ENCODE measurements at regions of chr12 and their contacts with region 1.

Region 1: GRCh38 chr12:111529424-111530368 is 69.4 kb downstream of the ATXN2 start:
- DNase-seq: peak; percentile 6
- H3K4me3 ChIP-seq: no peak overlapping the region
- H3K27me3 ChIP-seq: no peaks in the 10 kb centered on the region
- CTCF ChIP-seq: peak; percentile 74

Region 2: GRCh38 chr12:111519083-111519482 is 10.6 kb before region 1 on chr12:
- CTCF ChIA-PET with region 1: interaction called, 10 read pairs
- POLR2A ChIA-PET with region 1: no interaction called
- DNase-seq: no peak
- H3K4me3 ChIP-seq: no peak overlapping the region
- H3K27me3 ChIP-seq: no peaks in the 10 kb centered on the region
- CTCF ChIP-seq: no peak

Region 3: GRCh38 chr12:111636209-111636945 is 106.7 kb after region 1 on chr12:
- CTCF ChIA-PET with region 1: no interaction called
- POLR2A ChIA-PET with region 1: interaction called, 24 read pairs
- DNase-seq: peak; percentile 67
- H3K4me3 ChIP-seq: no peak overlapping the region
- H3K27me3 ChIP-seq: no peaks in the 10 kb centered on the region
- CTCF ChIP-seq: no peak

Measured in BJ (cell line).